ENCODE measurements at regions of chr14 and their contacts with region 1.

Region 1: DNA sequence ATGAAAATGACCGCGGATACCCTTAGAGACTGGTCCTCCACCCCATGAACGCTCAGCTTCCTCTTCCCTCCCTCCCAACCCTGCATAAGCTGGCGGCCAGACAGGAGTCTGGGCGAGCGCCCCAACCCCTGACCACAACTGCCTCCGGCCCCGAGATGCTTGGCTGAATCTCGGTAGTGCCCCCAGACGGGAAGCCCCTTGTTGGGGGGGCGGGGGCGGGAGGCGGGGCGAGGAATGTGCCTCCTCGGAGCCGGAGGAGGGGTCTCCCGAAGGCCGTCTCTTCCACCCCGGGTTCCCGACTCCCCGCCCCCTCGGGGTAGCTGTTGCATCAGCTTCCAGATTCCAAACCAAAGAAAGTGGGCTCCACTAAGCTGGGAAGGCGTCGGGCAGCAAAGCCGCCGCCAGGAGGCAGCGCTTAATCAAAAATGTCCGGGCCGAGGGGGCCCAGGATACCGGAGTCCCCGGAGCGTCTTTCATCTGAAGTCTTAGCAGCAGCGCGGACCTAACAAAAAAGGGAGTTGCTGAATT is 7.1 kb upstream of the MRPL52 start:
- DNase-seq: peak; percentile 72 to 86 (median 79)
- ATAC-seq: peak; percentile 76 to 91 (median 85)
- H3K4me3 ChIP-seq: peak overlapping the region in 11 of 12 donors; percentile 14 to 59 (median 51)
- H3K27ac ChIP-seq: peak overlapping the region in 7 of 12 donors; percentile 11 to 70 (median 24)
- H3K4me1 ChIP-seq: peaks cover 0 to 54% (median 21%) of the 10 kb centered on the region in 12 donors
- H3K27me3 ChIP-seq: no peaks in the 10 kb centered on the region
- CTCF ChIP-seq: peak; percentile 71 to 98 (median 92)
- POLR2A ChIP-seq: no peak

Region 2: GRCh38 chr14:22570132-22570949 is 252.3 kb before region 1 on chr14:
- intact Hi-C with region 1: loop called in 4 of 10 experiments (anchors 5 to 10 kb)
- DNase-seq: peak in 3 of 5 donors; percentile 52 to 78 (median 77)
- ATAC-seq: peak; percentile 47 to 81 (median 72)
- H3K4me3 ChIP-seq: peak overlapping the region in 1 of 12 donors; percentile 23
- H3K27ac ChIP-seq: peak overlapping the region in 5 of 12 donors; percentile 9 to 83 (median 30)
- H3K4me1 ChIP-seq: peaks cover 0 to 48% (median 8%) of the 10 kb centered on the region in 12 donors
- H3K27me3 ChIP-seq: no peaks in the 10 kb centered on the region
- CTCF ChIP-seq: peak; percentile 70 to 86 (median 78)
- POLR2A ChIP-seq: no peak

Region 3: GRCh38 chr14:22630486-22630885 is 192.1 kb before region 1 on chr14:
- intact Hi-C with region 1: no loop called
- DNase-seq: no peak
- ATAC-seq: no peak
- H3K4me3 ChIP-seq: no peak overlapping the region
- H3K27ac ChIP-seq: no peak overlapping the region
- H3K4me1 ChIP-seq: no peaks in the 10 kb centered on the region
- H3K27me3 ChIP-seq: peaks cover 0 to 4% (median 0%) of the 10 kb centered on the region in 9 donors
- CTCF ChIP-seq: no peak
- POLR2A ChIP-seq: no peak

Region 4: DNA sequence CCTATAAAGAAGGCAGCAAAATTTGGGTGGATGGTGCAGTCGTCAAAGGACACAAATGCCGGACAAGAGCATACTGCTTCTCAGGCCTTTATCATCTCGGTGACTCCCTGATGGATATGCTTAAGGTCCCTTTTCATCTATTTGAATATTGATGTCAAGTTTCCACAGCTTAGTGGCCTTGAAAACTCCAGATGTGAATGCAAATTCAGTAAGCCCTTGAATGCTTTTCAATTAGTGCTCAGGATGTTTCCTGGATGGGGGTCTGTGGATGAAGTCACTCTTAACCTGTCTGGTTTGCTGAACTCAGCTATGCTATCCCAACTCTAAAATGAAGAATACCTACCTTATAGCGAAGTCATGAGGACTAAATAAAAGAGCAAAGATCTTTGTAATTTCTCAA is 71.1 kb after region 1 on chr14:
- intact Hi-C with region 1: no loop called
- DNase-seq: no peak
- ATAC-seq: no peak
- H3K4me3 ChIP-seq: no peak overlapping the region
- H3K27ac ChIP-seq: no peak overlapping the region
- H3K4me1 ChIP-seq: peaks cover 0 to 5% (median under 1%) of the 10 kb centered on the region in 12 donors
- H3K27me3 ChIP-seq: no peaks in the 10 kb centered on the region
- CTCF ChIP-seq: no peak
- POLR2A ChIP-seq: no peak

Measured in heart left ventricle (tissue), 16 donors.